ENCODE measurements at regions of chr17 and their contacts with region 1.

Region 1: DNA sequence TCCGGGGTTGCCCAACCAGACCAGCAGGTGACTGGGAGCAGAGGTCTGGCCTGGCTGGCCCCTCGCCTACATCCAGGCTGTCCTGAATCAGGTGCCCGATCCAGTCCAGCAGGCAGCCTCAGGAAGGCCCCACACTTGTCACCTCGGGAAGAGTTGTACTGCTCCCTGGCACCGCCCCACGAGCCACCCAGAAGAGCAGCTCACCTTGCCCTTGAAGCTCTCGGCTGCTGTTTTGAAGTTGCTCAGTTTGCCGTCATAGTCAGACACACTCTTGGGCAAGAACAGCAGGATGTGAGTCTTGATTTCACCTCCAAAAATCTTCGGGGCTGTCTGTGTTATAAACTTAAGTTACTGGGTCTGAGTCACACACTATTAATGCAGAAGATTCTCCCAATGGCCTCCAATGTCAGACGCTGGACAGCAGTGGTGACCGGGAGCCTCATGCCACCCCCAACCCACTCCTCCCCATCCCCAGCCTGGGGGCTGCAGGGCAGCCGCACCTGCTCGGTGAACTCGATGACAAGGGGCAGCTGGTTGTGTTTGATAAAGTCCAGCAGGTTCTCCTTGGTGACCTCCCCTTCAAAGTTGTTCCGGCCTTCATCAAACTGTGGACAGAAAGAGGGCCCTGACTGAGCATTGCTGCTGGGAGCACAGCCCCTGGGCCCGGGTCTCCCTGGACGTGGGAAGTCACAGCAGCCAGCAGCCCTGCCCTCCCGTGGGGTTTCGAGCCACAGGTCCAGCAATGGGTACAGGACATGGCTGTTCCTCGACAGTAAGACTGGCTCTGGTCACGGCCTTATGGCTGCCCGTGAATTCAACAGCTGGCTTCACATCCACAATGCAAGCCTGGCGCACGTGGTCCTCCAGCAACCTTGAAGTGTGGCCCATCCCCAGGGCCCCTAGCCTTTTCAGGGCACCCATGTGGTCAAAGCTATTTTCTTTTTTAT is 12.2 kb upstream of the PPP1R27 start:
- DNase-seq: no peak
- H3K4me3 ChIP-seq: no peak overlapping the region
- H3K27ac ChIP-seq: no peak overlapping the region
- H3K4me1 ChIP-seq: no peaks in the 10 kb centered on the region
- H3K27me3 ChIP-seq: no peaks in the 10 kb centered on the region
- CTCF ChIP-seq: no peak

Region 2: DNA sequence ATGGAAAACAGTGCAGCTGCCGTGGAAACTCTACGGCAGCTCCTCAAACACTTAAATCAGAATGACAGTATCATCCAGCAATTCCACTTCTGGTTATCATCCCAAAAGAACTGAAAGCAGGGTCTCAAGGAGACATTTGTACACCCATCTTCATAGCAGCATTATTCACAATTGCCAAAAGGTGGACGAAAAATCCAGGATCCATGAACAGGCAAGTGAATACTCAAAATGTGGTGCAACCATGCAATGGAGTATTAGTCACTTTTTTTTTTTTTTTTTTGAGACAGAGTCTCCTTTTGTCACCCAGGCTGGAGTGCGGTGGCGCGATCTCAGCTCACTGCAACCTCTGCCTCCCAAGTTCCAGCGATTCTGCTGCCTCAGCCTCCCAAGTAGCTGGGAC is 670.4 kb before region 1 on chr17:
- CTCF ChIA-PET with region 1: interaction called, 11 read pairs
- POLR2A ChIA-PET with region 1: no interaction called
- intact Hi-C with region 1: no loop called
- DNase-seq: no peak
- H3K4me3 ChIP-seq: no peak overlapping the region
- H3K27ac ChIP-seq: no peak overlapping the region
- H3K4me1 ChIP-seq: no peaks in the 10 kb centered on the region
- H3K27me3 ChIP-seq: no peaks in the 10 kb centered on the region
- CTCF ChIP-seq: no peak

Region 3: GRCh38 chr17:82410014-82410716 is 563.1 kb after region 1 on chr17:
- CTCF ChIA-PET with region 1: interaction called, 10 read pairs
- POLR2A ChIA-PET with region 1: no interaction called
- intact Hi-C with region 1: no loop called
- DNase-seq: no peak
- H3K4me3 ChIP-seq: no peak overlapping the region
- H3K27ac ChIP-seq: no peak overlapping the region
- H3K4me1 ChIP-seq: no peaks in the 10 kb centered on the region
- H3K27me3 ChIP-seq: no peaks in the 10 kb centered on the region
- CTCF ChIP-seq: no peak

Measured in PC-9 (cell line).